ENCODE measurements at regions of chr12 and their contacts with region 1.

Region 1: DNA sequence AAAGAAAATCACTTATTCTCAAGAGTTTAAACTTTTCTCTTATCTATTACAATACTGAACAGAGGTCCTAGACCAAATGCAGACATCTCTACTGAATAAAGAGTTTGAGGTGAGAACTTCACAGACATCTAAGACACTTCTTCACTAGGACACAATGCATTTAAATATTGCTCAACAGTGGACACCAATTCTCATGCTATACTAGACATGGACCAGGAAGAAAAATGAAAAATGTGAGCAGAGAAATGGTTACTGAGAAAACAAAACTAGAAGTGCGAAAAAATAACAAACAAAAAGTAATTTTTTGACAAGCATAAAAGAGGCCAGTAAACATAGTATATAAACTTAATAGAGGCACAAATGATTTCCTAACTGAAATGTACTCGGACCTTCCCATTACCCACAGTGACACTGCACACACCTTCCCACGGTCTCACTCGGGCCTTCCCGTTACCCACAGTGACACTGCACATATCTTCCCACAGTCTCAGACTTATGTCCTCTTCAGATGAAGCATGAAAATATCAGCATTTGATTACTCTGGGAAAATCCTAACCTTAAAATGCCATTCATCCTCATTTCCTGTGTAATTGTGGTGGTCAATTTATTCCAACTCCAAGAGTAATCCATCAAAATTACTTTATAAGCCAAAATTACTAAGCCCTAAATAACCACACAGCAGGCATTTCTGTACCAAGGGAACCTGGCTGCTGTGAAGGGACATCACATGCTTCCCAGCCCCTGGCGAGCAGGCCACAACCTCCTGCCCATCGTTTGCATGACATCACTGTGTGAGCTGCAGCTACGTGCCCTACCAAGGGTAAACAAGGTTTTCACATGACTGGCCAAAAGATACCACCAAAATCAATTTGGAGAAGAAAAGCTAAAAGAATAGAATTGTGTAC is 6.4 kb downstream of the SLC15A4 start:
- H3K4me3 Mint-ChIP-seq: peak overlapping the region; percentile 14
- H3K27ac Mint-ChIP-seq: peak overlapping the region; percentile 68
- H3K4me1 Mint-ChIP-seq: peaks cover 78% of the 10 kb centered on the region
- H3K27me3 Mint-ChIP-seq: no peaks in the 10 kb centered on the region

Region 2: GRCh38 chr12:128914908-128915563 is 97.7 kb after region 1 on chr12:
- intact Hi-C with region 1: loop called (anchors 10 kb)
- H3K4me3 Mint-ChIP-seq: no peak overlapping the region
- H3K27ac Mint-ChIP-seq: no peak overlapping the region
- H3K4me1 Mint-ChIP-seq: peaks cover 30% of the 10 kb centered on the region
- H3K27me3 Mint-ChIP-seq: peaks cover 2% of the 10 kb centered on the region